ENCODE measurements at regions of chr13 and their contacts with region 1.

Region 1: GRCh38 chr13:95842898-95843297 is 166.0 kb downstream of the DNAJC3 start:
- DNase-seq: no peak
- ATAC-seq: no peak
- H3K4me3 ChIP-seq: no peak overlapping the region
- H3K27ac ChIP-seq: no peak overlapping the region
- H3K4me1 ChIP-seq: no peaks in the 10 kb centered on the region
- H3K27me3 ChIP-seq: no peaks in the 10 kb centered on the region
- CTCF ChIP-seq: no peak

Region 2: GRCh38 chr13:95509521-95510310 is 333.2 kb before region 1 on chr13:
- intact Hi-C with region 1: loop called in 1 of 3 experiments (anchors 10 kb)
- DNase-seq: no peak
- ATAC-seq: peak in 1 of 4 donors; percentile 26
- H3K4me3 ChIP-seq: no peak overlapping the region
- H3K27ac ChIP-seq: no peak overlapping the region
- H3K4me1 ChIP-seq: peaks cover 0 to 9% (median 4%) of the 10 kb centered on the region in 3 donors
- H3K27me3 ChIP-seq: no peaks in the 10 kb centered on the region
- CTCF ChIP-seq: no peak